PC-9 (cell line): ENCODE measurements at regions of chr9 and their contacts with region 1.

Region 1: DNA sequence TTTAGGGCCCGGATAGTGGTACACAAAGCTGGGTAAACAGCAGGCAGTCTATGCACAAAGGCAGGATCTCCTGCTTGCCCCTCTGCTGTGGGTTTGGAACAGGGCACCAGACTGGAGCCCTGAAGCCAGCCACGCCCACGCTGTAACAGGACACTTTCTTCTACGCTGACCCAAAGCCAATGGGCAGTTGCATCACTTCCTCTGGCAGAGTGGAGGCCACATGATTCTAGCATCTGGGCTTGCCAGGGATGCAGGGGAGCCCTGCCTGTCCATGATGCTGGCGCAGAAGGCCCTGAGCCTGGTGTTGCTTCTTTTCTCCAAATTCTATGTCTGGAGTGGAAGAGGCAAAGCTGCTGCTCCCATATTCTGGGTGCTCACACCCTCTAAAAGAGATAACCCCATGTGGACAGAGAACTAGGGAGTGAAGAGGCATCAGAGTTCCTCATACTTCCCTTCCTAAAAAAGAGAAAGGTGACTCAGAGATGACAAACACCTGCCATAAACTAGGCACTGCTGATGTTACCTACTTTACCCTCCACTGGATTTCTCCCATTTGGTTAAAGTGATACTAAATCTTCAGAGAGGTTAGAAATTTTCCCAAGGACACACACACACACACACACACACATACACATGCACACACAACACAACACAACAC is 260.3 kb upstream of the KLF4 start:
- DNase-seq: peak; percentile 86 to 87
- H3K4me3 ChIP-seq: peak overlapping the region; percentile 25; the same call in 1 of the 2 replicates
- H3K27ac ChIP-seq: peak overlapping the region; percentile 99
- H3K4me1 ChIP-seq: peaks cover 62% of the 10 kb centered on the region
- H3K27me3 ChIP-seq: no peaks in the 10 kb centered on the region
- CTCF ChIP-seq: no peak

Region 2: DNA sequence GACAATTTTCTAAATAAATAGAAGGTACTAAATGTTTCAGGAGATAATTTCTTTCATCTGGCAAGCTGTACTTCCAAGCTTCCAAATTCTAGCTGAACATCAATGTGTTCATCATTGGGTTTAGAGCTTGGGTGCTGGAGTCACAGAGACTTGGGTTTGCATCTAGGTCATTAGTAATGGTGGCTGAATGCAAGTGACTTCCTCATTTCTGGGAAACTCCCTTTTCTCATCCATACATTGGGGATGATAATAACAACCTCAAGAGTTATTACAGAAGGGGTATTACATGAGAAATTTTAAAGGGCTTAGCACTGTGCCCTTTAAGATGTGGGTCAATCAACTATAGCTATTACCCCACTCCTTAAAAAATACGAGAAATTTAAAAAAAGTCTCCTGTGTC is 219.2 kb before region 1 on chr9:
- CTCF ChIA-PET with region 1: interaction called, 16 read pairs
- POLR2A ChIA-PET with region 1: no interaction called
- intact Hi-C with region 1: no loop called
- DNase-seq: no peak
- H3K4me3 ChIP-seq: no peak overlapping the region
- H3K27ac ChIP-seq: no peak overlapping the region
- H3K4me1 ChIP-seq: no peaks in the 10 kb centered on the region
- H3K27me3 ChIP-seq: no peaks in the 10 kb centered on the region
- CTCF ChIP-seq: no peak

Region 3: GRCh38 chr9:107711540-107711939 is 38.4 kb before region 1 on chr9:
- CTCF ChIA-PET with region 1: interaction called, 3 read pairs
- POLR2A ChIA-PET with region 1: interaction called, 6 read pairs
- intact Hi-C with region 1: loop called (anchors 1 kb)
- DNase-seq: peak; percentile 80 to 92
- H3K4me3 ChIP-seq: no peak overlapping the region
- H3K27ac ChIP-seq: peak overlapping the region; percentile 79
- H3K4me1 ChIP-seq: peaks cover 28% of the 10 kb centered on the region
- H3K27me3 ChIP-seq: no peaks in the 10 kb centered on the region
- CTCF ChIP-seq: no peak

Region 4: DNA sequence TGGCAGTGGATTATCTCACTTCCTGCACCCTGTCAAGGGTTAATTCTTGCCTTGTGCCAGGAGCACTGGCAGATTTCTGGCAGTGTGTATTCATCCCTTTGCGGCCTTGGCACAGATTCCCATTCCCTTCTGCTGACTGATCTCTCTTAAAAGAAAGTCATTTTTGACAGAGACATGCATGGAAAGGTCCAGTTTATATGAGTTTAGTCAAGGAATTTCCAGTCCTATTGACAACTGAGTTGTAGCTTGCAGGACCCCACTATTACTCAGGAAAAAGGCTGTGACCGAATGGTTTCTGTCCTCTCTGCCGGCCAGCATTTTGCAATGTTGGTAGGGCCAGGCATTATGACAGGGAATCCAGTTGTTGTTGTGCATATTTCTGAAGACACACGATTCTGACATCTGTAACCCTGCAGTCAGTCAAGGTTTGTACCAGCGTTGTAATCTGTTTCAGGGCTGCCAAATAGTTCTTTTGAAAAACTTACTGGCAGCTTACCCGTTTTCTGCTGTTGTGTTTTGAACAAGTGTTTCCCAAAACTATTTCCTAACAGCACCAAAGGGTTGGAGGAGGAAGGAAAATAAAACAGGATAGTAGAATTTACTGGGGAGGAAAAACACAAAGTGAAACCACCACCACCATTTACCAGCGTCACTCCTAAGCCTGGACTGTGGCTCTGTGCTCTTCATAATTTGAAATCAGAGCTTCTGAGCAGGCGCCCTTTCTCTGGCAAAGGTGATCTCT is 17.0 kb before region 1 on chr9:
- CTCF ChIA-PET with region 1: no interaction called
- POLR2A ChIA-PET with region 1: no interaction called
- intact Hi-C with region 1: no loop called
- DNase-seq: no peak
- H3K4me3 ChIP-seq: no peak overlapping the region
- H3K27ac ChIP-seq: no peak overlapping the region
- H3K4me1 ChIP-seq: no peaks in the 10 kb centered on the region; the same call in 1 of the 2 replicates
- H3K27me3 ChIP-seq: no peaks in the 10 kb centered on the region
- CTCF ChIP-seq: no peak

Region 5: DNA sequence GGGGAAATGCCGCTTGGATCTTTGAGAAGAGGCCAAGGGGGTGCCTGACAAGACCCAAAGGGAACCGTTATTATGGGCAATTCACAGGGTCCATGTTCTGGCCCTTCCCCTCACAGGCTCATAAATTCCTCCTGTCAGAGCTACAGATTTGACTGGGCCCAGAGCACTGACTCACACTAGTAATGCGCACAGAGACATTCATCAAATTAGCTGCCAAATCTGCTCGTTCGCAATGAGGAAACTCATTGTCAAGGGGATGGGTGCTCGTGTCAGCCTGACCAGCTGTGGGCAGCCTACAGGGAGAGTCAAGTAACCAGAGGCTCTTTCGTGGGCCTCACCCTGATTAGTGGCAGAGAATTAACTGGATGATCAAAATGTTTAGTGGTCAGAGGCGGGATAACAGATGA is 728.5 kb after region 1 on chr9:
- CTCF ChIA-PET with region 1: no interaction called
- POLR2A ChIA-PET with region 1: no interaction called
- intact Hi-C with region 1: loop called (anchors 10 kb)
- DNase-seq: peak; percentile 57 to 93
- H3K4me3 ChIP-seq: no peak overlapping the region
- H3K27ac ChIP-seq: peak overlapping the region; percentile 87
- H3K4me1 ChIP-seq: peaks cover 48% of the 10 kb centered on the region
- H3K27me3 ChIP-seq: no peaks in the 10 kb centered on the region
- CTCF ChIP-seq: no peak